ENCODE measurements at regions of chr12 and their contacts with region 1.

Region 1: GRCh38 chr12:51357374-51358047 is 11.0 kb upstream of the CELA1 start:
- DNase-seq: peak; percentile 88
- ATAC-seq: peak; percentile 83
- H3K4me3 ChIP-seq: peak overlapping the region in 2 of 5 experiments; percentile 4 to 6
- H3K4me3 Mint-ChIP-seq: peak overlapping the region; percentile 73
- H3K27ac ChIP-seq: peak overlapping the region in 1 of 2 donors; percentile 57
- H3K27ac Mint-ChIP-seq: peak overlapping the region; percentile 53
- H3K4me1 ChIP-seq: peaks cover 30 to 43% of the 10 kb centered on the region in 2 donors
- H3K4me1 Mint-ChIP-seq: peaks cover 39% of the 10 kb centered on the region
- H3K27me3 ChIP-seq: no peaks in the 10 kb centered on the region
- H3K27me3 Mint-ChIP-seq: no peaks in the 10 kb centered on the region
- CTCF ChIP-seq: no peak

Region 2: GRCh38 chr12:51284476-51284875 is 73.0 kb before region 1 on chr12:
- CTCF ChIA-PET with region 1: no interaction called
- POLR2A ChIA-PET with region 1: no interaction called
- intact Hi-C with region 1: no loop called
- DNase-seq: no peak
- ATAC-seq: no peak
- H3K4me3 ChIP-seq: no peak overlapping the region
- H3K4me3 Mint-ChIP-seq: no peak overlapping the region
- H3K27ac ChIP-seq: no peak overlapping the region
- H3K27ac Mint-ChIP-seq: no peak overlapping the region
- H3K4me1 ChIP-seq: no peaks in the 10 kb centered on the region
- H3K4me1 Mint-ChIP-seq: peaks cover 9% of the 10 kb centered on the region
- H3K27me3 ChIP-seq: no peaks in the 10 kb centered on the region
- H3K27me3 Mint-ChIP-seq: no peaks in the 10 kb centered on the region
- CTCF ChIP-seq: no peak

Region 3: DNA sequence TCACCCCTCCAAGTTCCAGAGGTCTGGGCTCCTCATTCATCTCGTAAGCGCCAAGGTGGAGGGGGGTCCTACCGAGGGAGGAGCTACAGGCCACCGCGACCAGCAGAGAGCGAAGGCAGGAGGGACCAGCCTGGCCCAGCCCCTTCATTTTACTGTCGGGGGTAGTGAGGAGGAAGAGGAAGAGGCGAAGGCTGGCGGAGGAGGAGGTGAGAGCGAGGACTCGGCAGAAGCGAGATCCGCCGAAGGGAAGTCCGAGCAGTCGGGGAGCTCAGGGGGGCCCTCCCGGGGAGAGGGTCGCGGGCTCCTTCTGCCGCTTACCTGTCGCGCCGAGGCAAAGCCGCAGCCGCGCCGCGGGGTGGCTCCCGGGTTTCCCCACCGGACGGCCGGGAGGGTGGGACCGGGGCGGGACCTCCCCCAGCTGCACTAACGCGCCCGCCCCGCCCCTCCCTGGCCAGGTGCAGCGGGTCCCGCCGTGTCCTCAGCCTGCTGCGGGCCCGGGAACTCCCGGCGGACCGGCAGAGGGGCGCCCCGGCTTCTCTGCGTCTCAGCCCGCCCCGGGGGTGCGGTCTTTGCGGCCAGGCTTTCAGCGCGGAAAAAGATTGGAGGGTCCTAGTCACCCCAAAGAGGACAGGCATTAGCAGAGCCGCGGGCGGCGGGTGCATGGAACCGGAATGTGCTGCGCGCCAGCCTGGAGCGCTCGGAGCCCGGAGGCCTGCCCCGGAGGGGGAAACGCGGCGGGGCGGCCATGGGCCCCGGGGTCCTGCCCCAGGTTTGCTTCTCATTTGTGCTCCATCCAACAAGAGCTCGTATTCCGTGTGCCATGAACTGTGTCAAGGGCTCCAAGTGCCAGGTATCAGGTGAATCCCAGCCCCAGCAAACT is 34.0 kb after region 1 on chr12 and contains the start of gene GALNT6:
- CTCF ChIA-PET with region 1: no interaction called
- POLR2A ChIA-PET with region 1: interaction called, 4 read pairs
- intact Hi-C with region 1: loop called (anchors 5 kb)
- DNase-seq: peak; percentile 88
- ATAC-seq: peak; percentile 79
- H3K4me3 ChIP-seq: peak within 1 kb of the TSS; percentile 55 to 87 (median 83)
- H3K4me3 Mint-ChIP-seq: peak within 1 kb of the TSS; percentile 90
- H3K27ac ChIP-seq: peak within 1 kb of the TSS; percentile 68 to 87
- H3K27ac Mint-ChIP-seq: peak within 1 kb of the TSS; percentile 88
- H3K4me1 ChIP-seq: peaks cover 68 to 79% of the 10 kb centered on the region in 2 donors
- H3K4me1 Mint-ChIP-seq: peaks cover 74% of the 10 kb centered on the region
- H3K27me3 ChIP-seq: no peaks in the 10 kb centered on the region
- H3K27me3 Mint-ChIP-seq: no peaks in the 10 kb centered on the region
- CTCF ChIP-seq: no peak
- total RNA-seq, gene GALNT6: 8.5 and 9.0 TPM in 2 replicates

Measured in B cell (primary cell).